CD4-positive, alpha-beta memory T cell (primary cell): ENCODE measurements at regions of chr12 and their contacts with region 1.

Region 1: DNA sequence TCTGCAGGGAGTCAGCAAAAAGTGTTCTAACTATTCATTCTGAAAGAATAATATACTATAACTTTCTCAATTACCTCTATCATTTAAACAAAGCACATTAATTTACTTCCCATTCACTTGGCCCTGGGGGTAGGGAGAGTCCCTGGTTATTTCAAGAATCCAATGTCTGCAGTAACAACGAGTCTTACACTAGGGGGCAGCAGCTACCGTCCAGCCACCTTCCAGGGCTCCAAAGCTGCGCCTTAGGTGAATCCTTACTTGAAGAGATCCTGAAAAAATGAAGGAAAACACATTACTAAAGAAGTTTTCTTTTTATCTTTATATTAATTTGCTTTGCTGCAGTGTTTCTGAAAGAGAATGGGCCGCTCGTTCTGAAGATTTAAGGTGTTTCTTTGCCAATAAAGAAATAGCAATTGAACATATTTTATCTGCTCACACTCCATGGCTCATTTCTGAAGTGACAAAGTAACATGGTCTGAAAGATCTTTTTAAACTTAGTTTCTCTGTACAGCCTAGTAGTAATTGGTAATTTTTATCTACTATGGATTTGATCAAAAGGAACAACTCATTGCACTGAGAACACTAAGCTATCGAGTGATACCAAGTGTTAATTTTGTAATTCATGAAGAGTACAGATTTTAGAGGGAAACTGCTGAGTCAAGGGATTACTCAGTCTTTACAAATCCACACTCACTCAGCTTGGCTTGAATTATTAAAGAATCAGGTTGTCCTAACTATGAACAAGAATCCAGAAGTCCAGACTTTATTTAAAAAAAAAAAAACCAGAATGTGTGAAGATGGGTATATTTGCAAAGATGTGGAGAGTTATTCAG is 27.6 kb downstream of the BHLHE41 start:
- DNase-seq: peak; percentile 48 to 54 (median 49)
- H3K4me3 ChIP-seq: no peak overlapping the region
- H3K4me3 Mint-ChIP-seq: no peak overlapping the region
- H3K27ac ChIP-seq: no peak overlapping the region
- H3K27ac Mint-ChIP-seq: no peak overlapping the region
- H3K4me1 ChIP-seq: no peaks in the 10 kb centered on the region
- H3K4me1 Mint-ChIP-seq: peaks cover 0 to 1% (median 0%) of the 10 kb centered on the region in 4 donors
- H3K27me3 ChIP-seq: no peaks in the 10 kb centered on the region
- H3K27me3 Mint-ChIP-seq: peaks cover 7 to 9% of the 10 kb centered on the region in 2 donors

Region 2: DNA sequence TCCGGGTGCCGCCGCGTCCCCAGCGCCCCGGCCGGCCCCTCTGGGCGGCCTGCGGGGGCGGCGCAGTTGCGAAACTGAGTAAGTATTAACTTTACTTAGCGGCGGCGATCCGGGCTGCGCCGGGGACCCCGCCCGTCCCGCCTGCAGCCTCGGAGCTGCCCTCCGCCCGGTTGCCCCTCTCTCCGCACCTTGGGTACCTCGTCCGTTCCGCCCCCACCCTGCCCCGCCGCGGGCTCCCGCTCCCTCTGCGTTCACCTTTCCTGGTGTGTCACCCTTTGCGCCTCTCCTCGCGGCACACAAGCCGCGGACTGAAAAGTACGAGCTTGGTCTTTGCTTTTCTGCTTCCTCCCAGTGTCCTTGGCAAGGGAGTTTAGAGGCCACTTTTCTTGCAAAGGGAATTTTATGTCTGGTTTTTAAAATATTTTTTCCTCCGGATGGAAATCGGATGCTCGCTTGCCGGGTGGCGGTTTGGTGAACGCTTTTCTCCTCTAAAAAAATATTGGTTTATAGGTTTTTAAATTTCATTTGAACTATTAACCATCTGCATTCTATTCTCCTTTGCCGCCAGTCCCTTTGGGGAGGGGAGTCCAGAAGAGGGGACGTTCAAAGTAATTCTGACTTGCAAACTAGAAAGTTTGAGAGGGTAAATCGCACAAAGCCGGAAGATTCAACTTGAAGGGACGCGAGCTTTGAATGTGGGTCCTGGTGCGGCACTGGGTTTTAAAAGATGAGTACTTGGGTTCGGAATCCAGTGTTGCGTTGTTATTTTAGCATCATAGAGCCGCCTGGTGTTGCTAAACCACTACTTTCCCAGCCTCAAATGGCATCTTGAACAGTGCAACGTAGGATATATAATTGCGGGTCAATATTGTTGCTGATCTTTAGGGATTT is 137.9 kb before region 1 on chr12:
- CTCF ChIA-PET with region 1: no interaction called
- POLR2A ChIA-PET with region 1: no interaction called
- intact Hi-C with region 1: no loop called
- DNase-seq: no peak
- H3K4me3 ChIP-seq: peak overlapping the region in 1 of 2 donors; percentile 11
- H3K4me3 Mint-ChIP-seq: peak overlapping the region; percentile 63 to 81 (median 72)
- H3K27ac ChIP-seq: no peak overlapping the region
- H3K27ac Mint-ChIP-seq: no peak overlapping the region
- H3K4me1 ChIP-seq: peaks cover 17% of the 10 kb centered on the region
- H3K4me1 Mint-ChIP-seq: peaks cover 7 to 31% (median 14%) of the 10 kb centered on the region in 4 donors
- H3K27me3 ChIP-seq: peaks cover 17% of the 10 kb centered on the region
- H3K27me3 Mint-ChIP-seq: peaks cover 39 to 48% of the 10 kb centered on the region in 2 donors

Region 3: GRCh38 chr12:26122681-26123481 is 25.6 kb after region 1 on chr12:
- CTCF ChIA-PET with region 1: interaction called, 12 read pairs
- POLR2A ChIA-PET with region 1: no interaction called
- intact Hi-C with region 1: loop called (anchors 2 kb)
- DNase-seq: peak in 2 of 5 donors; percentile 14 to 16
- H3K4me3 ChIP-seq: peak overlapping the region in 1 of 2 donors; percentile 33
- H3K4me3 Mint-ChIP-seq: peak overlapping the region; percentile 82 to 95 (median 88)
- H3K27ac ChIP-seq: no peak overlapping the region
- H3K27ac Mint-ChIP-seq: peak overlapping the region in 3 of 7 donors; percentile 16 to 62 (median 23)
- H3K4me1 ChIP-seq: peaks cover 39% of the 10 kb centered on the region
- H3K4me1 Mint-ChIP-seq: peaks cover 26 to 61% (median 39%) of the 10 kb centered on the region in 4 donors
- H3K27me3 ChIP-seq: peaks cover 45% of the 10 kb centered on the region
- H3K27me3 Mint-ChIP-seq: peaks cover 54 to 63% of the 10 kb centered on the region in 2 donors

Region 4: DNA sequence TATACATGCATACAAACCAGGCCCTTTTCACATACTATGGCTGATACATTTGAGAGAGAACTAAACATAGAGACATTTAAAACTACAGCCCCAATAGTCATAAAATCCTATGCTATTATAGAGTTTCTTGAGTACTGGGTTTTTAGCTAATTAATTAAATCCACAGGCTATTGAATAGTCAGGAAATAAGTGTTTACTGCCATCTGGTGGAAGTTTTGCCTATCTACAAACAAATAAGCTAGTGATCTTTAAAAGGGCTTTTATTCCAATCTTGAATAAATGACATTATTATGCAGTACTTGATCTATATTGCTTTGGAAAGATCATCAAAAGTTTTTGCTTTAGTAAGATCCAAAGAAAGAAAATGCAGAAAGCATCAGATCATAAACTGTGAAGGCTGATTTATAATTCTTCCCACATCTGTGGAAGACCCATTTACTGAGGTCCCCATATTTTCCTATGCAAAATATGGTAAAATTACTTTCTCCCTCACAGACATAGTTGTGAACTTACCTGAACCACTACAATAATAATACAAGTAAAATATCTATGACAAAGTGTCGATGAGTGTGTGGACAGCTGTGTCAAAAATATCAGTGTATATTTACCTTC is 604.4 kb after region 1 on chr12:
- CTCF ChIA-PET with region 1: interaction called, 11 read pairs
- POLR2A ChIA-PET with region 1: no interaction called
- intact Hi-C with region 1: loop called (anchors 1 kb)
- DNase-seq: peak in 4 of 5 donors; percentile 14 to 23 (median 18)
- H3K4me3 ChIP-seq: no peak overlapping the region
- H3K4me3 Mint-ChIP-seq: no peak overlapping the region
- H3K27ac ChIP-seq: no peak overlapping the region
- H3K27ac Mint-ChIP-seq: peak overlapping the region in 1 of 7 donors; percentile 47
- H3K4me1 ChIP-seq: no peaks in the 10 kb centered on the region
- H3K4me1 Mint-ChIP-seq: no peaks in the 10 kb centered on the region
- H3K27me3 ChIP-seq: no peaks in the 10 kb centered on the region
- H3K27me3 Mint-ChIP-seq: no peaks in the 10 kb centered on the region